RWPE1 (cell line): ENCODE measurements at regions of chr7 and their contacts with region 1.

Region 1: DNA sequence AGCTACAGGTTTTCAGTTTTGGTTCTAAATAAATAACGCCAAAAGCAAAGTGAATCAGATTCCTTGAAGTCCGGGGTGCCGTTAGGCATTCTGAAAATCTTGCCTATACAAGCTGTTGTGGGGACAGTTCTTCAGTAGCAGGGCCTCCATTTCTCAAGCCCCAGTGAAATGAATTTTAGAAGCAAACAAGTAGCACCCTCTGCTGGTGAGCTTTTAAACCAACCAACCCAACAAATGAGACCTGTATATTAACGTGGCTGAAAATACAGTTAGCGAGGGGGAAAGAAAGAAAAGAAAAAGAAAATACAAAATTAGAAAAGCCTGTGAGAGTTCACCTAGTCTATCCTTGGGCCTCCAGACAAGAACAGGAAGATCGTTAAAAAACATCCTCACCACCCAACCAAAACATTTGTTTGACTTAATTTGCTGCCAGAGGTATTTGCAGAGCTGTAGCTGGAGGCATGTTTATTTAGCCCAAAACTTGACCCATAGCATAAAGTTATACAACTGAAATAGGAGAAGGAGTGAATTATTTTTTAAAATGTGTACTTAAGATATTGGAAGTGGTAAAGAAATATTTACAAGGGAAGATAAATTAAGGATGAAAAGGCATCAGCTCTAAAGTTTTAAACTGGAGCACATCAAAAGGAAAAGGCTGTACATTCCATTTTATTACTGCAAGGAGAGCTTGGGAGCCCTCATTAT is 98.9 kb downstream of the DYNC1I1 start:
- DNase-seq: peak; percentile 32
- H3K27ac ChIP-seq: no peak overlapping the region
- CTCF ChIP-seq: peak; percentile 40

Region 2: GRCh38 chr7:94781236-94781635 is 1090.0 kb before region 1 on chr7:
- CTCF ChIA-PET with region 1: no interaction called
- POLR2A ChIA-PET with region 1: no interaction called
- DNase-seq: no peak
- H3K27ac ChIP-seq: no peak overlapping the region
- CTCF ChIP-seq: no peak

Region 3: GRCh38 chr7:95723592-95724180 is 147.5 kb before region 1 on chr7:
- CTCF ChIA-PET with region 1: interaction called, 20 read pairs
- POLR2A ChIA-PET with region 1: no interaction called
- DNase-seq: peak; percentile 50
- H3K27ac ChIP-seq: no peak overlapping the region
- CTCF ChIP-seq: peak; percentile 34

Region 4: GRCh38 chr7:95788884-95789283 is 82.3 kb before region 1 on chr7:
- CTCF ChIA-PET with region 1: no interaction called
- POLR2A ChIA-PET with region 1: no interaction called
- DNase-seq: no peak
- H3K27ac ChIP-seq: no peak overlapping the region
- CTCF ChIP-seq: no peak

Region 5: GRCh38 chr7:96100737-96101136 is 229.5 kb after region 1 on chr7:
- CTCF ChIA-PET with region 1: no interaction called
- POLR2A ChIA-PET with region 1: no interaction called
- DNase-seq: no peak
- H3K27ac ChIP-seq: no peak overlapping the region
- CTCF ChIP-seq: no peak

Region 6: DNA sequence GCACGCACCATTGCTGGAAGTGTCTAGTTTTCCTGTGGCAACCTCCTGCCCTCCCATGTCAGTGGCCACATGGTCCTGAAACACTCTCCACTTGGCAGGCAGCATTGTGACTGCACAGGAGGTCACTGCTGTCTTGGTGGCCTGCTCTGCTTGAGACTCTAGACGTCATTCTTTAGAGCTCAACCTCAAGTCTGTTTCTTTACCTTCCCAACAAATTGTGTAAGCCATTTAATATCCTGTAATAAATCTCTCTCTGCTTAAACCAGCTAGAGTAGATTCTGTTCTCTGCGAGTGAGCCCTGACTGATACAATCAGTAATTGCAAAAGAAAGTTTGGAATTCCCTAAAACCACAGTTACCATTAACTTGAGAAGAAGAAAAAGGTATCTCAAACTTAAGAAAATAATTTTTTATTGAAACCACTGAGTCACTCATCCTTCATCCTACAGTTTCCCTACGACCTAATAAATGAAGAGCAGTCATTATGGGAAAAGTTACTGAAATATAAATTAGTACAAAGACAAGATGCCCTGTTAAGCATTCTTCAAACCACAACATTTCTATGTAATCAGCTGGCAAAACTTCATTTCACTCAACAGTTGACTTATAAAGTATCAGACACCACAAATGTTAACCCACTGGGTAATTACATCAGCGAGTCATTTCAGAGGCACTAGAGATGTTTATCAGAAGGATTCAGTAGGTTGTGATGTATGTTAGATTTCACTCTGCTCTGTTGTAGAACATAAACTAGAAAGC is 432.6 kb after region 1 on chr7:
- CTCF ChIA-PET with region 1: no interaction called
- POLR2A ChIA-PET with region 1: no interaction called
- DNase-seq: no peak
- H3K27ac ChIP-seq: no peak overlapping the region
- CTCF ChIP-seq: no peak